Activated naive CD4-positive, alpha-beta T cell treated with anti-CD3 and anti-CD28 coated beads for 36 hours (primary cell): ENCODE measurements at regions of chr3 and their contacts with region 1.

Region 1: GRCh38 chr3:179929091-179929529 is 107.6 kb downstream of the PEX5L start:
- DNase-seq: peak; percentile 61
- H3K4me3 Mint-ChIP-seq: no peak overlapping the region
- H3K27ac Mint-ChIP-seq: no peak overlapping the region
- H3K4me1 Mint-ChIP-seq: no peaks in the 10 kb centered on the region
- H3K27me3 Mint-ChIP-seq: peaks cover 15% of the 10 kb centered on the region

Region 2: DNA sequence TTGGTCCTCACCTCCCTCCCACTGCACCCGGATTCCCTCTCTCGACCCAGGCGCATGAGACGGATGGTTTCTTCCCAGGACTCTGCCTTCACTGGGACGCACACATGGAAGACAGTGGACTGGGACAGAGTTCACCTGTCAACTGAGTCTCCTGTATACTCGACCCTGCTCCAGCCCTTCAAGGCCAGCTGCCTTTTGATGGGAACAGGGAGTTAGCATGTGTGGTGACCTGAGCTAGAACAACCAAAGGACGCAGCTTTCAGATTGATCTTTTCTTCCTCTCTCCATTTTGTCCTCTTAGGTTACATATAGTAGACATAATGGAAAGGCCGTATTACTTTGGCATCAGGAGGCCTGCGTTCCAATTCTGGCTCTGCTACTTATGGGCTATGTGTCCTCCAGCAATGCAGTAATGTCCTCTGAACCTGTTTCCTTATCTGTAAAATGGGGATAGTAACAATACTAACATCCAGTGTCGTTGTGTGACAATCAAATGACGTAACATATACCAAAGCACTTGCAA is 13.5 kb after region 1 on chr3:
- CTCF ChIA-PET with region 1: interaction called, 12 read pairs
- intact Hi-C with region 1: no loop called
- DNase-seq: no peak
- H3K4me3 Mint-ChIP-seq: no peak overlapping the region
- H3K27ac Mint-ChIP-seq: no peak overlapping the region
- H3K4me1 Mint-ChIP-seq: no peaks in the 10 kb centered on the region
- H3K27me3 Mint-ChIP-seq: peaks cover 21% of the 10 kb centered on the region

Region 3: DNA sequence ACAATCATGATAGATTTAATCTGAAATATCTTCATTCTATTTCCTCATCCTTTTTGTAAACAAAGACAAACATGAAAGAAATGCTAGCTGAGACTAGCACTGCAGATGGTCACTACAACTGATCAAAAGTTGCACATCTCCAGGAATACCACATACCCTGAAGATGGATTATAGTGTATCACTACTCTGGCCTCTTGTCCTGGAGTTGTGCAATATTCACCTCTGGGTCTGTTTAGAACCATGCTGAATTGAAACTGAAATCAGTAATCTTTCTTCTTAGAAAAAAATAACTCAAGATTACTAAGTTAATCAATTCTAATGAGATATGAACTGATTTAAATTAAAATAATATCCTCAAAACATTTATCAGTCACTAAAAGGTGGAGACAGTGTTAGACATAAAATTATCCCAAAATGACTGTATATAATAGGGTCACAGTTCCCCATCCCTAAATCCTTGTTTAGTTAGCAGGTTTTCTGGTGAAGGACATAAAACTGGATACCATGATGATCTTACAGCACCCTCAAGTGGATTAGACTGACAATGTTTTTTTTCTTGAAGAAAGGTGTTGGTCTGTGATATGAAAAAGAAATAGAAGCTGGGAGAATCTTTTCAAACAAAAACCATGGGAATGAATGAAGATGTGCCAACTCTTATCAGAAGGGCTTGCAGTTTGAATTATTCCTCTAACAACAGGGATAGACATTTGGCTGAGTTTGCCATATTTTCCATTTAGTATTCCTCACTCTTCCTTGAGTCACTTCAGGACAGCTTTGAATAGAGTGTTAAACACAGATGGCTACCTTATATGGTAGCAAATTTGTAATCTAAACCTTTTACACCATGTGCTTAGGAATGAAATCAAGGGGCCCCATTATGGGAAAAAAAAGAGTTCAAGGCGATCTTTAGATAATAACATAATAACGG is 665.8 kb after region 1 on chr3:
- CTCF ChIA-PET with region 1: interaction called, 4 read pairs
- intact Hi-C with region 1: loop called (anchors 1 kb)
- DNase-seq: no peak
- H3K4me3 Mint-ChIP-seq: no peak overlapping the region
- H3K27ac Mint-ChIP-seq: no peak overlapping the region
- H3K4me1 Mint-ChIP-seq: no peaks in the 10 kb centered on the region
- H3K27me3 Mint-ChIP-seq: peaks cover 36% of the 10 kb centered on the region

Region 4: DNA sequence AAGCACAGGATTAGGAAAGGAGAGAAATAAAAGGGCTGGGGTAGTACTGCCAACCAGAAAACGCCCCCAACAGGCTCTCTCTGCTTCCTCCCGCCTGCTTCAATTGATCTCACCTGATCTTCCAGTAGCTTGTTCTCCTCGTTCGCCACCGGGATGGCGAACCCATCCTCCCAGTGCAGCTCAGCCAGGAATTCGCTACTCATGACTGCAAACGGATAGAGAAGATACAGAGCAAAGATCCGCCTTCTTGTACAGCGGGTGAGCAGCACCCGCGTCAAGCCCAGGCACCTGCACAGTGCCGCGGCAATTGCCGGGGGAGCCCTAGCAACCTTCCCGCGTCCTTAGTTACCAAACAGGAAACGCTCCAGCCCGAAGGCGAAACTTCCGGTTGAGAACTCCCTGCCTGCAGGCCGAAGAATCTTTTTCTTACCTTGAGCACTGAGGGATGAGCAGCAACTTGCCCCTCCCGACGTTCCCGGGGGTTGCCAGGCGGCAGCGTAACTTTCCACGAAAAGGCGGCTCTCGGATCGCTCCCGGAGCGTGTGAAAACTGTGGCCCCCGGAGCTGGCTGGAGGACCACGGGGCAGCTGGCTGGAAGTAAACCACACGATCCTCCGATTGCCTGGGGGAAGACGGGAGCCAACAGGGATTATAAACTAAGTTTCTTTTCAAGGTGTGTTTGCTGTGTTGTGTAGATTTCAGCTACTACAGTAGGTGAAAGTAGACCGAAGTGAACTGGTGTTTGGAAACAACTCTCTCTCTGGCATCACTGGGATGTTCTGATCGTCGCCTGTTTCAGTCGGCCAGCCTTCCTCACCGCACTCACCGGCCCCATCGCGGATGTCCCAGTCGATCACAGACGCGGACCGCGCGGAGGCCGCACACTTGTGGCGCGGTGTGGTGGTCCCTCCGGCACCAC is 750.3 kb after region 1 on chr3 and contains the start of gene CCDC39:
- CTCF ChIA-PET with region 1: no interaction called
- intact Hi-C with region 1: loop called (anchors 5 kb)
- DNase-seq: peak; percentile 74
- H3K4me3 Mint-ChIP-seq: peak within 1 kb of the TSS; percentile 83
- H3K27ac Mint-ChIP-seq: no peak within 1 kb of the TSS
- H3K4me1 Mint-ChIP-seq: peaks cover 11% of the 10 kb centered on the region
- H3K27me3 Mint-ChIP-seq: peaks cover 40% of the 10 kb centered on the region
- total RNA-seq, gene CCDC39: not detected

Region 5: DNA sequence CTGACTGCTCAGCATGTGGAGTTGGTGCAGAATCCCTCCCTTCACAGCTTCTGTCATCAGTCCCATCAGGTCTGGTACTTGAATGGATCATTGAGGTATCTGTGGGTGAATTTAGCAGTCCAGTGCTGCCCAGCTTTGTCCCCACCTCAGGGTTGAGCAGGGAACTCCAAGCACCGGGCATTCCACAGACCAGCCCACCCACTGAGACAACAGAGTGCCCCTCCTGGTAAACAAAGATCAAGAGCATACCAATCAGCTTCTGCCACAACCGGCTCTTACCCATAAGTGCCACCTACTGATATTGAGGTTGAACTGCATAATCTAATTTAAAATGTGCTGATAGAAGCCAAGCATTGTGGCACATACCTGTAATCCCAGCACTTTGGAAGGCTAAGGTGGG is 926.3 kb after region 1 on chr3:
- CTCF ChIA-PET with region 1: no interaction called
- intact Hi-C with region 1: loop called (anchors 5 kb)
- DNase-seq: no peak
- H3K4me3 Mint-ChIP-seq: no peak overlapping the region
- H3K27ac Mint-ChIP-seq: no peak overlapping the region
- H3K4me1 Mint-ChIP-seq: no peaks in the 10 kb centered on the region
- H3K27me3 Mint-ChIP-seq: peaks cover 12% of the 10 kb centered on the region